ENCODE measurements at regions of chr19 and their contacts with region 1.

Region 1: DNA sequence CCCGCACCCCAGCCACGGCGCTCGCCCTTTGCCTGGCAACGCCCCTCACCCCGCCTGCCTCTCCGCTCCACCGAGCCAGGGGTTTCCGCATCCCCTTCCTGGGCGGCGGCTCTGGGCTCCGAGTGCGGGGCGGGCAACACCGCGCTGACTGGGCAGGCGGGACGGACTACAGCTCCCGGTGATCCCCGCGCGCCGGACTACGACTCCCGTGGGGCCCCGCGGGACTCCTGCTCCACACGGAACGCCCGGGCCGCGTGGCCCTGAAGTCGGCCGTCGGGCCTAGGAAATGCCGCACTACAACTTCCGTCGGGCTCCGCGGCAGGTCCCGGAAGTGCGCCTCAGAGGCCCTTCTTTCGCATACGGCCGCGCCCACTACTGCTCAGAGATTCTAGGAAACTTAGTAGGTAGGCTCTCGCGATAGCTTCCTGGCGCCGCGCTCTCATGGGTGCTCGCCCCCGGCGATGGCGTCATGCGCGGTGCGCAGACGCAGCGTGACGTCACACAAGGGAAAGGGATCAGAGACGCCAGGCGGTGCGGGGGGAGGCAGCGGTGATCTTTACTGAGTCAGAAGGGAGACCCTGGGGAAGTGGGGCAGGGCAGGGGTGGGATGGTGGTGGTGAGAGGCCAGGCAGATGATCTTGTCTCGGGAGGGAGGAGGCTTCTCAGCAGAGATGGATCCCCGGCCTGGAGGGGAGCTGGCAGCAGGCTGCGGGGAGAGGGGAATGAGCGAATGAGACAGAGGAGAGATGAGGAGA is at the start of gene JOSD2:
- DNase-seq: peak; percentile 99
- H3K4me3 Mint-ChIP-seq: peak within 1 kb of the TSS; percentile 87
- H3K27ac Mint-ChIP-seq: peak within 1 kb of the TSS; percentile 94
- H3K4me1 Mint-ChIP-seq: peaks cover 23% of the 10 kb centered on the region
- H3K27me3 Mint-ChIP-seq: peaks cover 22% of the 10 kb centered on the region
- total RNA-seq, gene JOSD2: 17.2 to 17.9 TPM

Region 2: GRCh38 chr19:50357178-50358100 is 153.8 kb before region 1 on chr19:
- CTCF ChIA-PET with region 1: interaction called, 3 read pairs
- intact Hi-C with region 1: loop called (anchors 1 kb)
- DNase-seq: peak; percentile 91
- H3K4me3 Mint-ChIP-seq: peak overlapping the region; percentile 82
- H3K27ac Mint-ChIP-seq: peak overlapping the region; percentile 92
- H3K4me1 Mint-ChIP-seq: peaks cover 45% of the 10 kb centered on the region
- H3K27me3 Mint-ChIP-seq: no peaks in the 10 kb centered on the region

Region 3: GRCh38 chr19:50383852-50384684 is 127.2 kb before region 1 on chr19 and contains the start of gene POLD1:
- CTCF ChIA-PET with region 1: no interaction called
- intact Hi-C with region 1: loop called (anchors 1 kb)
- DNase-seq: peak; percentile 99
- H3K4me3 Mint-ChIP-seq: peak within 1 kb of the TSS; percentile 98
- H3K27ac Mint-ChIP-seq: peak within 1 kb of the TSS; percentile 95
- H3K4me1 Mint-ChIP-seq: peaks cover 36% of the 10 kb centered on the region
- H3K27me3 Mint-ChIP-seq: no peaks in the 10 kb centered on the region
- total RNA-seq, gene POLD1: 221 to 224 TPM

Region 4: GRCh38 chr19:50657712-50658440 is 146.6 kb after region 1 on chr19:
- CTCF ChIA-PET with region 1: no interaction called
- intact Hi-C with region 1: loop called (anchors 1 kb)
- DNase-seq: peak; percentile 96
- H3K4me3 Mint-ChIP-seq: peak overlapping the region; percentile 81
- H3K27ac Mint-ChIP-seq: peak overlapping the region; percentile 73
- H3K4me1 Mint-ChIP-seq: peaks cover 19% of the 10 kb centered on the region
- H3K27me3 Mint-ChIP-seq: peaks cover 73% of the 10 kb centered on the region

Region 5: GRCh38 chr19:51108066-51108804 is 597.0 kb after region 1 on chr19 and contains the start of gene CTU1:
- CTCF ChIA-PET with region 1: no interaction called
- intact Hi-C with region 1: loop called (anchors 1 kb)
- DNase-seq: peak; percentile 99
- H3K4me3 Mint-ChIP-seq: peak within 1 kb of the TSS; percentile 98
- H3K27ac Mint-ChIP-seq: peak within 1 kb of the TSS; percentile 84
- H3K4me1 Mint-ChIP-seq: peaks cover 40% of the 10 kb centered on the region
- H3K27me3 Mint-ChIP-seq: no peaks in the 10 kb centered on the region
- total RNA-seq, gene CTU1: 9.2 to 9.9 TPM

Measured in activated naive CD4-positive, alpha-beta T cell treated with anti-CD3 and anti-CD28 coated beads for 36 hours (primary cell).